ENCODE measurements at regions of chr2 and their contacts with region 1.

Region 1: DNA sequence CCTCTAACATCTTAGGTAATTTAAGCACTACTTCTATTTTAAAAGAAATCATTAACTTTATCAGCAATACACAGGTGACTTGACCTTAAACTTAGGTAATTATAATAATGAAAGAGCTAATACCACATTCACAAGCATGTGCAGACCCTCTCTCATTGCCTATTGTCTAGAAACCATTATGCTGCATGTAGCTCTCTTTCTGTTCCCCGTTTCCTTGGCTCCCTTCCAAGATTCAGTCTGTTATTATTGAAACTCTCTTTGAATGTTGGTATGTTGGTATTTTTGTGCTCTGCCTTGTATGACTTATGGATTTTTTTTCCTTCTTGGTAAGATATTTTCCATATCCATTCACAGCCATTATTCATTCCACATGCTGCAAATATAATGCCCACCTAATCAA is 201.2 kb downstream of the CDCA7 start:
- DNase-seq: no peak
- ATAC-seq: no peak
- H3K4me3 ChIP-seq: no peak overlapping the region
- H3K27ac ChIP-seq: no peak overlapping the region
- H3K4me1 ChIP-seq: peaks cover 31% of the 10 kb centered on the region
- CTCF ChIP-seq: no peak
- EP300 ChIP-seq: no peak
- POLR2A ChIP-seq: no peak
- RAD21 ChIP-seq: no peak

Region 2: GRCh38 chr2:173568054-173568453 is 12.2 kb after region 1 on chr2:
- CTCF ChIA-PET with region 1: interaction called, 10 read pairs
- POLR2A ChIA-PET with region 1: no interaction called
- DNase-seq: peak in 1 of 2 experiments; percentile 65
- ATAC-seq: peak; percentile 70 to 85; a peak in 4 of 6 replicates
- H3K4me3 ChIP-seq: no peak overlapping the region
- H3K27ac ChIP-seq: 0 out of 6 replicates have a peak overlapping the region, but pooled peaks of 1 of the 2 experiments have one; percentile 14
- H3K4me1 ChIP-seq: peaks cover 21% of the 10 kb centered on the region
- CTCF ChIP-seq: peak; percentile 53
- EP300 ChIP-seq: no peak
- POLR2A ChIP-seq: no peak
- RAD21 ChIP-seq: peak; percentile 64 to 80

Region 3: DNA sequence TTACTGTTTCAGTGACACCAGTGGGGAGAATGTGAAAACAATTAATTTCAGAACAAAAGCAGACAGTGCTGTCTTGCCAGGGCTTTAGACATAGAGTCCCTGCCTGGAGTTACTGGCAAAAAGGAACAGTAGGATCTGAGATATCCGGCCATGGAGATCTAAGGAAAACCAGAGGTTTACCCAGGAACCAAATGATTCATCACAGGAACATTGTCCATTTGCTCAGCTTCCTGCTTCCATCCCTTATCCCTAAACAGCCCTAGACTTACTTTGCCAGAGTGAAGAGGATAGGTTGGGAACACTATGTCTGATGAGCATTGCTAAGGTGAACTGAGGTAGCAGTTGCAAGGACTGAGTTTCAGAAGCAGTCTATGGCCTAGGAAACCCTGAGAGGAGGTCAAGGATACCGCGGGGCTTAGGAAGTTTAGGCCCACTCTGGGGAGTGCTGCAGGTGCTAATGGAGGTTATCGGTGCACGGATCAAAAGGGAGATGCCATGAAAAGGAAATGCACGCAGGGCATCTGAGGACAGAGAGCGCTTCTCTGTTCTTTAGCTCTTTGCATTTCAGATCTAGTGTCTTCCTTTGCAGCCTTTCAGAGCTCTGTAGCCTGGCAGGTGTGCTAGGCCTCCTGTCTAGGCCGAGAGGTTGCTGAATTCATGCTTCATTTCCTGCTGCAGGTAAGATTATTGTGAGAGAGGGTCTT is 22.7 kb after region 1 on chr2:
- CTCF ChIA-PET with region 1: no interaction called
- POLR2A ChIA-PET with region 1: no interaction called
- DNase-seq: no peak
- ATAC-seq: no peak
- H3K4me3 ChIP-seq: no peak overlapping the region
- H3K27ac ChIP-seq: no peak overlapping the region
- H3K4me1 ChIP-seq: peaks cover 11% of the 10 kb centered on the region; the same call in 2 of the 3 replicates
- CTCF ChIP-seq: no peak
- EP300 ChIP-seq: no peak
- POLR2A ChIP-seq: no peak
- RAD21 ChIP-seq: no peak

Region 4: DNA sequence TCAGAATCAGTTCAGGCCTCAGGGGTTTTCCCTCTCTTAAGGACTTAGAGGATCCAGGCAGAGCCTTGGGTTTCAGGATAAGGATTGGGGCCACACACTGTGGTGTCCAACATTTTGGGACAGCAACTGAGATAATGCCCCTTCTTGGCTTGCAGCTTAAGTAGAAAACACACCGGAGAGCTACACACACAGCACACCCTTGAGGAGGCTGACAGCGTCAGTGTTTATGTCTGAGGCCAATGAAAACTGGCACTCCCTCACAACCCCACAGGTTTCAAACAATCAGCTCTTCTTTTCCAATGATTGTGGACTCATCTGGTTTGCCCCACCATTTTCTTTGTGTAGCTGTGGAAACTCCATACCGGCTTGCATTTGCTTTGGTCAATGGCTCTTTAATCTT is 56.5 kb after region 1 on chr2:
- CTCF ChIA-PET with region 1: no interaction called
- POLR2A ChIA-PET with region 1: no interaction called
- DNase-seq: no peak
- ATAC-seq: no peak
- H3K4me3 ChIP-seq: no peak overlapping the region
- H3K27ac ChIP-seq: no peak overlapping the region
- H3K4me1 ChIP-seq: no peaks in the 10 kb centered on the region
- CTCF ChIP-seq: no peak
- EP300 ChIP-seq: no peak
- POLR2A ChIP-seq: no peak
- RAD21 ChIP-seq: no peak

Measured in A549 (cell line).